ENCODE measurements at regions of chr20 and their contacts with region 1.

Region 1: GRCh38 chr20:57582432-57583305 is 21.8 kb downstream of the PCK1 start:
- DNase-seq: no peak
- ATAC-seq: peak; percentile 40 to 80 (median 74)
- H3K4me3 ChIP-seq: no peak overlapping the region
- H3K27ac ChIP-seq: peak overlapping the region in 1 of 4 donors; percentile 52
- H3K4me1 ChIP-seq: no peaks in the 10 kb centered on the region
- H3K27me3 ChIP-seq: peaks cover 0 to 5% (median 0%) of the 10 kb centered on the region in 4 donors
- CTCF ChIP-seq: no peak

Region 2: GRCh38 chr20:57374931-57375651 is 207.6 kb before region 1 on chr20:
- intact Hi-C with region 1: loop called in 1 of 3 experiments (anchors 10 kb)
- DNase-seq: no peak
- ATAC-seq: peak in 3 of 4 donors; percentile 41 to 81 (median 67)
- H3K4me3 ChIP-seq: no peak overlapping the region
- H3K27ac ChIP-seq: peak overlapping the region in 2 of 4 donors; percentile 4 to 30
- H3K4me1 ChIP-seq: no peaks in the 10 kb centered on the region
- H3K27me3 ChIP-seq: no peaks in the 10 kb centered on the region
- CTCF ChIP-seq: no peak

Region 3: DNA sequence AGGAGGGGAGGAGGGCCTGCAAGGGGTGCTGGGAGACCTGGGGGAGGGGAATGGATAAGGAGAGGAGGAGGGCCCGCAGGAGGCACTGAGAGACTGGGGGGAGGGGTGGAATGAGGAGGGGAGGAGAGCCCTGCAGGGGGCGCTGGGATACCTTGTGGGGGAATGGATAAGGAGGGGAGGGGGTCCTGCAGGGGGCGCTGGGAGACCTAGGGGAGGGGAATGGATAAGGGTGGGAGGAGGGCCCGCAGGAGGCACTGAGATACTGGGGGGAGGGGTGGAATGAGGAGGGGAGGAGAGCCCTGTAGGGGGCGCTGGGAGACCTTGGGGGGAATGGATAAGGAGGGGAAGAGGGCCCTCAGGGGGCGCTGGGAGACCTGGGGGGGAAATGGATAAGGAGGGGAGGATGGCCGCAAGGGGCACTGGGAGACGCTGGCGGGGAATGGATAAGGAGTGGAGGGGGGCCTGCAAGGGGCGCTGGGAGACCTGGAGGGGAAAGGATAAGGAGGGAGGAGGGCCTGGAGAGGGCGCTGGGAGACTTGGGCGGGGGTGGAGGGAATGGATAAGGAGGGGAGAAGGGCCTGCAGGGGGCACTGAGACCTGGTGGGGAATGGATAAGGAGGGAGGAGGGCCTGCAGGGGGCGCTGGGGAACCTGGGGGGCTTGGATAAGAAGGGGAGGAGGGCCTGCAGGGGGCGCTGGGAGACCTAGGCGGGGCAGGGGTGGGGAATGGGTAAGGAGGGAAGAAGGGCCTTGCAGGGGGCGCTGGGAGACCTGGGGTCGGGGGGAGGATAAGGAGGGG is 56.4 kb before region 1 on chr20:
- intact Hi-C with region 1: loop called in 1 of 3 experiments (anchors 10 kb)
- DNase-seq: peak in 1 of 6 donors; percentile 41
- ATAC-seq: no peak
- H3K4me3 ChIP-seq: no peak overlapping the region
- H3K27ac ChIP-seq: no peak overlapping the region
- H3K4me1 ChIP-seq: no peaks in the 10 kb centered on the region
- H3K27me3 ChIP-seq: no peaks in the 10 kb centered on the region
- CTCF ChIP-seq: no peak

Region 4: GRCh38 chr20:57849121-57849520 is 266.5 kb after region 1 on chr20:
- intact Hi-C with region 1: no loop called
- DNase-seq: no peak
- ATAC-seq: no peak
- H3K4me3 ChIP-seq: no peak overlapping the region
- H3K27ac ChIP-seq: no peak overlapping the region
- H3K4me1 ChIP-seq: no peaks in the 10 kb centered on the region
- H3K27me3 ChIP-seq: no peaks in the 10 kb centered on the region
- CTCF ChIP-seq: no peak

Measured in pancreas (tissue), 10 donors.